ENCODE measurements at regions of chr3 and their contacts with region 1.

Region 1: DNA sequence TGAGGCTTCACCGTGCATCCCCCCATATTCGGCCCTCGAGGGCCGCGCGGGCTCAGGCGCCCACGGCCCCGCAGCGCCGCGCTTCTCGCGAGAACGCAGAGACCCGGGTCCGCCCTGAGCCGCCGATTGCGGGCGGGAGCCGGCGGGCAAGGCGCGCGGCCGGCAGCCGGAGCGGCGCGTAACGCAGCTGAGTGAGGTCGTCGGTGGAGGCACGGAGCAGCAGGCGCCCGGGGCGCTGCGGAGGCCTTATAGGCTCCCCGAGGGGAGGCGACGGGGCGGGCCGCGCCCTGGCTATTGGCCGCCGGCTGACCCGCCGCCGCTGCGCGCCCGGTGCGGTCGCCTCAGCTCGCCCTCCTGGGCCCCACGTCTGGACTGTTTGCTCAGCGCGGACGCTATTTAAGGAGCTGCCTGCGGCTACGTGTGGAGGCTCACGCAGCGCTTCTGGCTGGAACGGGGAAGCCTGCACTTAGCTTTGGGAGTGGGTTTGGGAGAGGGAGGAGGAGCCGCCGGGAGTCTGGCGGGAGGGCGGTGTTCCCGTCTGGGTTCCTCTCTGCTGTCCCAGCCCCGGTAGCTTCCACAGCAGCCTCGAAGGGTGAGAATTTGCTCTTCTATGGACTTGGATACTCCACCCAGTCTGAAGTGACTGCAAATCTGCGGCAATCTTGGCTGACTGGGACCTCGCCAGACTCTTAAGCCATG is at the start of gene PLOD2:
- DNase-seq: peak; percentile 93
- H3K4me3 ChIP-seq: peak within 1 kb of the TSS; percentile 95
- H3K27ac ChIP-seq: peak within 1 kb of the TSS; percentile 91
- H3K4me1 ChIP-seq: peaks cover 66% of the 10 kb centered on the region
- H3K27me3 ChIP-seq: no peaks in the 10 kb centered on the region
- total RNA-seq, gene PLOD2: 306 and 330 TPM in 2 replicates

Region 2: GRCh38 chr3:145776782-145777408 is 384.2 kb before region 1 on chr3:
- in situ Hi-C with region 1: loop called (anchors 25 kb)
- DNase-seq: peak; percentile 69
- H3K4me3 ChIP-seq: no peak overlapping the region
- H3K27ac ChIP-seq: no peak overlapping the region
- H3K4me1 ChIP-seq: no peaks in the 10 kb centered on the region
- H3K27me3 ChIP-seq: peaks cover 16% of the 10 kb centered on the region; the same call in 1 of the 2 replicates

Region 3: DNA sequence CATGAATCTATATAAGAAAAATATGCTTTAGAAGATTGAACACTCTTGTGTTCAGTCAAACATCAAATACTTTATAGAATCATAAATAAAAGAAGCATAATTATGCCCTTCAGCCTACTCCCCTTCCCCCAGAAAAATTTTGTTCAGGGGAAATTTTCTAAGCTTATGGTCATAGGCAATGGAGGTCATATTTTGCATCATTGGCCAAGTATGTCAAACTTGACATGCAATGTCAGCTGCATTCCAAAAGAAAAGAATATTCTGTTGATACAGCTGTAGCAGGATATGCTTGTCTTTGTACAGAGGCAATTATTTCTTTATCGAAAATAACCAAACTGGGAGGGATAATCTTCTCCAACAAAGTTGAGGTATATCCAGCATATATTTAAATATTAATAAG is 1576.3 kb after region 1 on chr3:
- in situ Hi-C with region 1: no loop called
- DNase-seq: no peak
- H3K4me3 ChIP-seq: no peak overlapping the region
- H3K27ac ChIP-seq: no peak overlapping the region
- H3K4me1 ChIP-seq: peaks cover 2% of the 10 kb centered on the region; the same call in 1 of the 2 replicates
- H3K27me3 ChIP-seq: no peaks in the 10 kb centered on the region